ENCODE measurements at regions of chr1 and their contacts with region 1.

Region 1: GRCh38 chr1:224387302-224387912 is 30.7 kb downstream of the CNIH4 start:
- DNase-seq: no peak
- ATAC-seq: no peak
- H3K4me3 ChIP-seq: no peak overlapping the region
- H3K27ac ChIP-seq: peak overlapping the region in 2 of 10 donors; percentile 1 to 25
- H3K4me1 ChIP-seq: peaks cover 0 to 31% (median 0%) of the 10 kb centered on the region in 9 donors
- H3K27me3 ChIP-seq: no peaks in the 10 kb centered on the region
- CTCF ChIP-seq: no peak

Region 2: DNA sequence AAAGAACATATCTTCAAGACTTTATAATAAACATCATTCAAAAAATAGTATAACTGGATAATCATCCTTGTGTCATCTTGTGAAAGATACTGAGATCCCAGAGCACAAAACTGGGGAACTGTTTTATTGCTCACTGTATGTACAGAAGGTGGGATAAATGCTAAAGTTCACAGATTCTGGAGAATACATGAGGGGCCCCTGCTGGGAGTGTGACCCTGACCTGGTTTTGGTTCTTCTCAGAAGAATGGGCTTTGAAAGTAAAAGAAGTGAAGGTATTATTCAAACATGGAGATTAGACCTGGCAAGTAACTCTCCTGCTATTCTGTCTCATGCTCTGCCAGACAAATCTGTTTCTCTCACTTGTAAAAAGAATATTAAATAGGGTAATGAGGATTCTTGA is 32.7 kb after region 1 on chr1:
- intact Hi-C with region 1: loop called in 1 of 10 experiments (anchors 5 kb)
- DNase-seq: no peak
- ATAC-seq: no peak
- H3K4me3 ChIP-seq: no peak overlapping the region
- H3K27ac ChIP-seq: no peak overlapping the region
- H3K4me1 ChIP-seq: peaks cover 0 to 9% (median 0%) of the 10 kb centered on the region in 9 donors
- H3K27me3 ChIP-seq: no peaks in the 10 kb centered on the region
- CTCF ChIP-seq: no peak

Region 3: DNA sequence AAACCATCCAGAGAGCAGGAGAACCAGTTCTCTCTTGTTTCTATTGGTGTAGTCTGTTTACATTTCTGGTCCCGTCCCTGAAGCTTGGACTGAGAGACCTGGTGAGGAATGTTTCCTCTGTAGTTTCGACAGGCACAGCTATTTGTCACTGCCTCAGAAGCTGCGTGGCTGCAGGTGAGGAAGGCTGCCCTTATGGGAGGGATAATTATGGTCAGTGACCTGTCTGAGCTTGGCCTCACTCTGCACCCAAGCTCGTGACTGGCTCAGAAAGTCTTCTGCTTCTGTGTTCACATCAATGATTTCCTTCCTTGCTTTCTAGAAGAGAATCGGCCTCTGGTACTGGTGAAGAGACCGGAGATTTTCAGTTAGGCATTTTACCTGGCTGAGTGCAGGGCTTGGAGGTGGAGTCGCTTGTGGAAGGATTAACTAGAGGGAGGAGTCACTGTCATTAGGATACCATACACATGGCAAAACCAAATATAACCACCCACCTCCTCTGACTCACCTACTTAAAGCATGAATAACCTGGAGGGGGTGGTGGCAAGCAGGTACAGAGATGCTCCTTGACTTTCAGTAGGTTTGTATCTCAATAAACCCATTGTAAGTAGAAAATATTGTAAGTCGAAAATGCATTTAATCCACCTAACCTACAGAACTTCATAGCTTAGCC is 67.1 kb after region 1 on chr1:
- intact Hi-C with region 1: no loop called
- DNase-seq: no peak
- ATAC-seq: no peak
- H3K4me3 ChIP-seq: no peak overlapping the region
- H3K27ac ChIP-seq: no peak overlapping the region
- H3K4me1 ChIP-seq: peaks cover 0 to 32% (median 14%) of the 10 kb centered on the region in 9 donors
- H3K27me3 ChIP-seq: no peaks in the 10 kb centered on the region
- CTCF ChIP-seq: no peak